ENCODE measurements at regions of chr20 and their contacts with region 1.

Region 1: DNA sequence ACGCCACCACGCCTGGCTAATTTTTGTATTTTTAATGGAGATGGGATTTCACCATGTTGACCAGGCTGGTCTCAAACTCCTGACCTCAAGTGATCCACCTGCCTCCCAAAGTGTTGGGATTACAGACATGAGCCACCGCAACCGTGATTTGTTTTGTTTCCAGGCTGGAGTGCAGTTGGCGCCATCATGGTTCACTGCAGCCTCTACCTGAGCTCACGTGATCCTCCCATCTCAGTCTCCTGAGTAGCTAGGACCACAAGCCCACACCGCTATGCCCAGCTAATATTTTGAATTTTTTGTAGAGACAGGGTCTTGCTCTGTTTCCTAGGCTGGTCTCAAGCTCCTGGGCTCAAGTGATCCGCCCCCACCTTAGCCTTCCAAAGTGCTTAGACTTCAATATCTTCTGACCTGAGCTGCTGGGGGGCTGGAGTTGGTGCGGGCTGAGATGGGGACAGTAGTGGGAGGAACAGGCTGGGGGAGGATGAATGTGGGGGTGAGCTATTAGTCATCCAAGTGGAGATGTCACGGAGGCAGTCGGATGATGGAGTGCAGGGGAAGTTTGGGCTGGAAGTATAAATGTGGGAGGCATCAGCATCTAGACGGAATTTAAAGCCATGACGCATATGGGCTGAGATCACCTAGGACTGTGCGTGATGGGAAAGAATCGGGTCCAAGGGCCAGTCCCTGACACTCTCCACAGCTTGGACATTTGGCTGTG is 23.1 kb upstream of the ZMYND8 start:
- DNase-seq: no peak
- H3K4me3 Mint-ChIP-seq: no peak overlapping the region
- H3K27ac Mint-ChIP-seq: no peak overlapping the region
- H3K4me1 Mint-ChIP-seq: peaks cover 32% of the 10 kb centered on the region
- H3K27me3 Mint-ChIP-seq: no peaks in the 10 kb centered on the region
- CTCF ChIP-seq: no peak

Region 2: GRCh38 chr20:47196091-47197081 is 183.2 kb before region 1 on chr20:
- CTCF ChIA-PET with region 1: interaction called, 35 read pairs
- intact Hi-C with region 1: loop called (anchors 1 kb)
- DNase-seq: peak; percentile 95
- H3K4me3 Mint-ChIP-seq: peak overlapping the region; percentile 53
- H3K27ac Mint-ChIP-seq: no peak overlapping the region
- H3K4me1 Mint-ChIP-seq: peaks cover 38% of the 10 kb centered on the region
- H3K27me3 Mint-ChIP-seq: no peaks in the 10 kb centered on the region
- CTCF ChIP-seq: peak; percentile 99

Region 3: DNA sequence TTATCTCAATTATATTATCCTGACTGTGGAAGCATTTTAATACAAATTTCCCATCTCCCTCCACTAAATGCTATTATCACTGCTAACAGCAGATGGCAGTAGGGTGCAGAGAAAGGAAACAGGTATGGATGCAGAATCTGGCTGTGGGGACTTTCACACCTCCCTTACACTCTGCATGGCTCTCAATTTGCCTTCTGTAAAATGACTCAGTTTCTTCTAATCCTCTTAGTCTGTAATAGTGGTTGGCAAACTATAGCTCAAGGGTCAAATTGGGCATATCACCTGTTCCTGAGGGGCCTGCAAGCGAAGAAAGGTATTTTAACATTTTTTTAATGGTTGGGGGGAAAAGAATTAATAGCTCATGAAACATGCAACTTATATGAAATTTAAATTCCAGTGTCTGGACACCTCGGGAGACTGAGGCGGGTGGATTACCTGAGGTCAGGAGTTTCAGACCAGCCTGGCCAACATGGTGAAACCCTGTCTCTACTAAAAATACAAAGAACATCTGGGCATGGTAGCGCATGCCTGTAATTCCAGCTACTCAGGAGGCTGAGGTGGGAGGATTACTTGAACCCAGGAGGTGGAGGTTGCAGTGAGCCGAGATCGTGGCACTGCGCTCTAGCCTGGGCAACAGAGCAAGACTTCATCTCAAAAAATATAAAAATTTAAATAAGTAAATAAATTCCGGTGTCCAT is 106.5 kb before region 1 on chr20:
- CTCF ChIA-PET with region 1: interaction called, 346 read pairs
- intact Hi-C with region 1: loop called (anchors 1 kb)
- DNase-seq: peak; percentile 82
- H3K4me3 Mint-ChIP-seq: no peak overlapping the region
- H3K27ac Mint-ChIP-seq: peak overlapping the region; percentile 90
- H3K4me1 Mint-ChIP-seq: peaks cover 42% of the 10 kb centered on the region
- H3K27me3 Mint-ChIP-seq: no peaks in the 10 kb centered on the region
- CTCF ChIP-seq: peak; percentile 92

Region 4: GRCh38 chr20:47304287-47304686 is 75.3 kb before region 1 on chr20:
- CTCF ChIA-PET with region 1: interaction called, 42 read pairs
- intact Hi-C with region 1: loop called (anchors 5 kb)
- DNase-seq: no peak
- H3K4me3 Mint-ChIP-seq: no peak overlapping the region
- H3K27ac Mint-ChIP-seq: no peak overlapping the region
- H3K4me1 Mint-ChIP-seq: peaks cover 31% of the 10 kb centered on the region
- H3K27me3 Mint-ChIP-seq: no peaks in the 10 kb centered on the region
- CTCF ChIP-seq: no peak

Region 5: DNA sequence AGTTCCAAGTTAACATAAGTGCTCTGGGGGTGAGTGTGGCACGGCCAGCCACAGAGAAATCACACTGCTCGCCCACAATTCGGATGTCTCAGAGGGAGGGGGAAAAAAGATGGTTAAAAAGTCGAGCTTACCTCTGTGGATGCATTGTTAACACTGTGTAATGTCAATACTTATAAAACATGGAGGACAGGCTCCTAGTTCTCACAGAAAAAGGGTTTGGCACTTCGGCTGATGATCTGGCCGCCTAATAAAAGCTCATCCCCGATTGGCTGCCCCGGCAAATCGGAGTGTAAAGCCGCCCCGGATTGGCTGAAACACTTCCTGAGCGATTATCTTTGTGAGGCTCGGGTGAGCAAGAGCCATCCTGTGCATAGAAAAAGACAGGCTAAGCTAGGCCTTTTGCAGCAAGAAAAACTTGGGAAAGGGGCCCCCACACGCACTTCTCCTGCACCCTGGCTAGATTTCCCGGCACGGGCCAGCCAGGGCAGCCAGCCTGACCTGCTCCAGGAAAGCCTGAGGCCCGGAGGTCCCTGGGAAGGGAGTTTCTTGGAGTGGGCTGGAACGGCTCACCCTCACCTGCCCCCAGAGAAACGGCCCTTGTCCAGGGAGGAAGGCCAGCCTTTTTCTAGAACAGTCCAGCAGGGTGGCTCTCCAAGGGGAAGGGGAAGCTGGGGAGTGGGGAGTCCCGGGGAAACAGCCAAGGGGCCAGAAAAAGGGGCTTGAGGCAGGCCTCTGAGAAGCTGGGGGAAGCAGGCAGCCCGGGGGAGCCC is 22.9 kb before region 1 on chr20 and contains the start of gene ZMYND8:
- CTCF ChIA-PET with region 1: interaction called, 136 read pairs
- intact Hi-C with region 1: no loop called
- DNase-seq: peak; percentile 96
- H3K4me3 Mint-ChIP-seq: no peak within 1 kb of the TSS
- H3K27ac Mint-ChIP-seq: no peak within 1 kb of the TSS
- H3K4me1 Mint-ChIP-seq: no peaks in the 10 kb centered on the region
- H3K27me3 Mint-ChIP-seq: no peaks in the 10 kb centered on the region
- CTCF ChIP-seq: no peak
- total RNA-seq, gene ZMYND8: 53.1 and 77.3 TPM in 2 replicates

Region 6: DNA sequence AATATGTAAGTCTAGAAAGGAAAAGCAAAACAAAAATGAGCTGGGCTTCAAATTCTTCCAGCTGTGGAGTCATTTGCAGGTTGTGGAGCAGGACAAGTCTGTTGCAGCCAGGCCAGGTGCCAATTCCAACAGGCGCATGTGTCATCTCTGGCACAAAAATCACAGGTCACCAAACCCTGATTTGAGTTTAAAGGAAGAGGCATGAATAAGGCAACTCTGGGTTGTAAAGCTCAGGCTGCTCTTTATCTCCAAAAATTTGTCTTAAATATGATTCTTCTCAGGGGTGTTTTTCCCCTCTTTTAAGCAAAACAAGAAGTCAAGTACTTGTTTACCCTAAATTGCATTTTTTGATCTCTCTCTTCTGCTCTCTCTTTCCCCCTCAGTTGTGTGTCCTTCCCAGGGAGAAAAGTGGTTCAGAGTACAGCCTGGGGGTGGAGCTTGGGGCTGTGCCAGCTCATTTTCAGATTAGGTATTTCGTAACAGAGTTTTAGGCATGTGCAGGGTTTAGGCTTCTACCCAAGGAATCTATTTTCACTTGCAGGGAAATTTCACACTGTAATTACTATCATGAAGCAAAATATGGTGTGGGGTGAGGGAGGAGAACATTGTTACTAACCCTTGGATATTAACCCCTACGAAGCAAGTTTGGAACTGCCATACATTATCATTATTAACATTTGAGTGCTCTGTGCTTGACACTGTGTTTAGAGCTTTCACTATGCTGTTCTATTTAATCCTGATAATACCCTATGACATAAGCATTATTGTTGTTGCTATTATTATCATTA is 113.8 kb after region 1 on chr20:
- CTCF ChIA-PET with region 1: interaction called, 12 read pairs
- intact Hi-C with region 1: no loop called
- DNase-seq: peak; percentile 95
- H3K4me3 Mint-ChIP-seq: peak overlapping the region; percentile 35
- H3K27ac Mint-ChIP-seq: peak overlapping the region; percentile 68
- H3K4me1 Mint-ChIP-seq: peaks cover 37% of the 10 kb centered on the region
- H3K27me3 Mint-ChIP-seq: no peaks in the 10 kb centered on the region
- CTCF ChIP-seq: no peak